AG04450 (cell line): ENCODE measurements at regions of chr12 and their contacts with region 1.

Region 1: GRCh38 chr12:80837348-80837985 is 100.3 kb downstream of the LIN7A start:
- DNase-seq: peak; percentile 38
- H3K4me3 ChIP-seq: no peak overlapping the region
- H3K27ac ChIP-seq: no peak overlapping the region
- H3K27me3 ChIP-seq: no peaks in the 10 kb centered on the region
- CTCF ChIP-seq: peak; percentile 93

Region 2: DNA sequence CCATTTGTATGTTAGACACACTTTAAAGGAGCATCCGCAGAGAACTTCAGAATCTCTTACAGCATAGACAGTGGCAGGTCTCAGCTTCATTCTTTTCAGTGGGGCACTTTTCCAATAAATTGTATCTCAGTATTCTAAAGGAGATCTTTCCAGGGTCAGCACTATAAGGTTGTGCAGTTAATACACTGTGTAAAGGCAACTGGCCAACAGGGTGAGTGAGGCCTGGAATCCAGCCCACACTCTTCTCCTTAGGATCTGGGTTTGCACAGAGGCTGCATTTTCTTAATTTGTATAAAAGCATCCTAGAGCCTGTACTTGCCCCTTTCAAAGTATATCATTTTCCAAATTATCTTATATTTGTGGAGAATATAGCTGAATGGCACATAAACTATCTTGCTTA is 26.6 kb before region 1 on chr12:
- CTCF ChIA-PET with region 1: interaction called, 32 read pairs
- POLR2A ChIA-PET with region 1: no interaction called
- DNase-seq: no peak
- H3K4me3 ChIP-seq: no peak overlapping the region
- H3K27ac ChIP-seq: no peak overlapping the region
- H3K27me3 ChIP-seq: no peaks in the 10 kb centered on the region
- CTCF ChIP-seq: no peak

Region 3: GRCh38 chr12:80825506-80825905 is 12.0 kb before region 1 on chr12:
- CTCF ChIA-PET with region 1: interaction called, 26 read pairs
- POLR2A ChIA-PET with region 1: no interaction called
- DNase-seq: no peak
- H3K4me3 ChIP-seq: no peak overlapping the region
- H3K27ac ChIP-seq: no peak overlapping the region
- H3K27me3 ChIP-seq: no peaks in the 10 kb centered on the region
- CTCF ChIP-seq: no peak

Region 4: DNA sequence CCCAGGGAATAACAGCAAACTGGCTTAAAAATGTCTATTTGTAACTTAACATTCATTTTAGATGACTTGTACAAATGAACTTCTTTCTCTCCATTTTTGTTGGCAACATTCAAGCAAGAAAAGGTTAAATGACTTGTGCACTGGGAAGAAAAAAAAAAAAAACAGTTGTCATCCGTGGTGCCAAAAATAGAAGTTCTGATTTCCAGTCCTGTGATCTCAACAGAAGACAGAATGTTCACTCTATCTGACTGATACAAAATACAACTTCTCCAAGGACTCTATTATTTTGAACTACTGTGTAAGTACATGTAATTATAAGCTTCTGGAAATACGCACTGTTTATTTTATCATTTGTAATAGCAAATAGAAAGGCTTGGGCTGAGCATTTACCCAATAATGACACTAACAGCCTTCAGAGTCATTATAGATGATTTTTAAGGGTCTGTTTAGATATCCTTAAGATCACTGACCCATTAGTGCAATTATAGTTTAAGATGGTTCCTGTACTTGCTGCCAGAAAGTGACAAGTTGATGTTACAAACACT is 40.3 kb after region 1 on chr12:
- CTCF ChIA-PET with region 1: interaction called, 10 read pairs
- POLR2A ChIA-PET with region 1: no interaction called
- DNase-seq: no peak
- H3K4me3 ChIP-seq: no peak overlapping the region
- H3K27ac ChIP-seq: no peak overlapping the region
- H3K27me3 ChIP-seq: no peaks in the 10 kb centered on the region
- CTCF ChIP-seq: no peak

Region 5: DNA sequence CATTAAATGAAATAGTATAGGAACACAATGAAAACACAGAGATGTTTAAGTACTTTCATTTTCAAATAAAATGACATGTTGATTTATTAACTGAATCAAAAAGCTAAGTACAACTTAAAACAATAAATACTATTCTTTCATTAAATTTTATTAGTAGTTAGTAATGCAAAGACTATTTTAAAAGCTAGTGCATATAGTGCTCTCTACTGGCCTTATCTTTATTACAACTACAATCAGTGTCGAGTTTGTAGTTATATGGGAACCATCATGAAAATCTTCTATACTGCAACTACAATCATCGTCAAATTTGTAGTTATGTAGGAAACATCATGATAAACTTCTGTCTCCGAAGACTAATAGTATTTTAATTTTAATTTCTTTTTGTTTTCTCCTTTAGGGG is 109.1 kb after region 1 on chr12:
- CTCF ChIA-PET with region 1: interaction called, 25 read pairs
- POLR2A ChIA-PET with region 1: no interaction called
- DNase-seq: no peak
- H3K4me3 ChIP-seq: no peak overlapping the region
- H3K27ac ChIP-seq: no peak overlapping the region
- H3K27me3 ChIP-seq: no peaks in the 10 kb centered on the region
- CTCF ChIP-seq: peak; percentile 55

Region 6: DNA sequence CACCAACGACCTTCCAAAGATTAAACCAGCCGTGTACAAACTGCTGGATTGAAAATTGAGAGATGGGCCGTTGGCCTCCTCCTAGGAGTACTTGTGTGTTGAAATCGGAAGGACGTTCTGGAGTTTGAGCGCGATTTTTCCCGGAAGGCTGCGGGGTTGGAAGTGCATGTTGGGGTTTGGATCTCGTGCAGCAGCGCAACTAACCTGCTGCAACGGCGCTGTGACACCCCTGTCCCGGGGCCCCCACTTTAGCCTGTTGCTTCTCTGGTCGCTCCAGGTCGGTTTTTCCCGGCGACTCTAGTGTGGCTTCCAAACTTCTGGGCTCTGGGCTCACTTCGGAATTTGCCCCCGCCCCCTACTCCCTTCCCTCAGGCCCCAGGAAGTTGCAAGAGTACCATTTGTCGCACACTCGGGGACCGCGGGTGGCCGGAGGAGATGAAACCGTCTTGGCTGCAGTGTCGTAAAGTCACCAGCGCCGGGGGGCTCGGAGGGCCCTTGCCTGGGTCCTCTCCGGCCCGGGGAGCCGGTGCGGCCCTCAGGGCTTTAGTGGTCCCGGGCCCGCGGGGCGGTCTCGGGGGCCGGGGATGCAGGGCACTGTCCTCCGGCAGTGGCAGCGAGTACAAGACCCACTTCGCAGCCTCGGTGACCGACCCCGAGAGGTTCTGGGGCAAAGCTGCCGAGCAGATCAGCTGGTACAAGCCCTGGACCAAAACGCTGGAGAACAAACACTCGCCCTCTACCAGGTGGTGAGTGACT is 240.4 kb after region 1 on chr12 and contains the start of gene ACSS3:
- CTCF ChIA-PET with region 1: no interaction called
- POLR2A ChIA-PET with region 1: no interaction called
- DNase-seq: no peak
- H3K4me3 ChIP-seq: peak within 1 kb of the TSS; percentile 58
- H3K27ac ChIP-seq: no peak within 1 kb of the TSS
- H3K27me3 ChIP-seq: peaks cover 3% of the 10 kb centered on the region
- CTCF ChIP-seq: no peak
- polyA plus RNA-seq, gene ACSS3: 1.9 and 3.0 TPM in 2 replicates

Region 7: GRCh38 chr12:81257947-81258551 is 420.6 kb after region 1 on chr12:
- CTCF ChIA-PET with region 1: interaction called, 15 read pairs
- POLR2A ChIA-PET with region 1: no interaction called
- DNase-seq: peak; percentile 8
- H3K4me3 ChIP-seq: no peak overlapping the region
- H3K27ac ChIP-seq: no peak overlapping the region
- H3K27me3 ChIP-seq: no peaks in the 10 kb centered on the region
- CTCF ChIP-seq: peak; percentile 64